Activated CD4-positive, alpha-beta memory T cell treated with anti-CD3 and anti-CD28 coated beads for 36 hours (primary cell): ENCODE measurements at regions of chrX and their contacts with region 1.

Region 1: DNA sequence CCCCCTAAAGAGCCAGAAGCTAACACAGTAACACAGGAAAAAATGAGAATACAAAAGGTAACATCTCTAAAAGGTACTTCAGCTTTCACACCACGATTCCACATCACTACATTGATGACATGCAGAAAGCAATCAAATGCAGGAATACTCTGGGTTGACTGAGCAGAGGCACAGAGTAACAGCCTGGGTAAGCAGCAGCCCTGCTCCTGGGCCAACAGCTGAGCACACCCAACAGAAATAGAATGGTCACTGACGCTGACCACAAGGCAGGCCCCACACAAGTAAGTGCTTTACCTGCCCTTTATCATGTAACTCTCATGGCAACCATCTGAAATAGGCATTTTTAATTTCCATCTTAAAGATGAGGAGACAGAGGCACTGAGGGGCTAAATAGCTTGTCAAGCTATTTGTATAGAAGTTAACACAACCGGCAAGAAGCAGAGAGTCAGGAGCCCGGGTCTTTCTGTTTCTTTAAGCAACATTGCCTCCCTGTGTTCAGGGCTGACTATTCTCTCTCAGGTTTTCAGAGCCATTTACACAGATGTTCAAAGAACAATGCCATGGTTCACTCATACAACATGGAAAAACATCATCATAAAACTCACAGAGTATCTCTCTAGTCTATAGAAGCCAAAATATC is 168.9 kb downstream of the ZNF674 start:
- DNase-seq: peak; percentile 47
- H3K4me3 Mint-ChIP-seq: no peak overlapping the region
- H3K27ac Mint-ChIP-seq: no peak overlapping the region
- H3K4me1 Mint-ChIP-seq: peaks cover 13% of the 10 kb centered on the region
- H3K27me3 Mint-ChIP-seq: no peaks in the 10 kb centered on the region

Region 2: GRCh38 chrX:45322382-45322781 is 1054.0 kb before region 1 on chrX:
- CTCF ChIA-PET with region 1: interaction called, 10 read pairs
- POLR2A ChIA-PET with region 1: no interaction called
- intact Hi-C with region 1: no loop called
- DNase-seq: peak; percentile 8
- H3K4me3 Mint-ChIP-seq: no peak overlapping the region
- H3K27ac Mint-ChIP-seq: no peak overlapping the region
- H3K4me1 Mint-ChIP-seq: peaks cover 2% of the 10 kb centered on the region
- H3K27me3 Mint-ChIP-seq: peaks cover 3% of the 10 kb centered on the region

Region 3: GRCh38 chrX:46340696-46341095 is 35.7 kb before region 1 on chrX:
- CTCF ChIA-PET with region 1: no interaction called
- POLR2A ChIA-PET with region 1: no interaction called
- intact Hi-C with region 1: no loop called
- DNase-seq: no peak
- H3K4me3 Mint-ChIP-seq: no peak overlapping the region
- H3K27ac Mint-ChIP-seq: no peak overlapping the region
- H3K4me1 Mint-ChIP-seq: no peaks in the 10 kb centered on the region
- H3K27me3 Mint-ChIP-seq: no peaks in the 10 kb centered on the region